K562 (cell line): ENCODE measurements at regions of chr7 and their contacts with region 1.

Region 1: DNA sequence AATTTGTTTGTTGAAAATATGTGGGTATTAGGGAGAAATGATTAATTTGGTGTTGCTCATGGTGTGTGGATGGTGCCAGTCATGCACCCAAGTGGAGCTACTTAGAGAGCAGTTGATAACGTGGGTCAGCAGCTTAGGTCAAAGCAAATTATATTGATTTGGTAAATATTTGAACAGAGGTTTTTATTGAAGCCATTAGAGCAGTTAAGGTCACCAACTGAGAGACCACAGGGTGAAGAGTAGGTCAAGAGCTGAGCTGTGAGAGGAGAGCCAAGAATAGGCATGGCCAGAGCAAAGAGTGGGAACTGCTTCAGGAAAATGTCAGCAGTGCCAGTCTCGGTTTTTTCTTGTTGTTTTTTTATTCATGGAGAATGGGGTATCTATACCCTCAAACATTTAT is 97.9 kb downstream of the TMEM168 start:
- DNase-seq: no peak
- ATAC-seq: no peak
- H3K4me3 ChIP-seq: no peak overlapping the region
- H3K27ac ChIP-seq: no peak overlapping the region
- H3K4me1 ChIP-seq: no peaks in the 10 kb centered on the region
- H3K27me3 ChIP-seq: peaks cover 0 to 12% of the 10 kb centered on the region in 2 experiments; a peak in 2 of 5 replicates
- CTCF ChIP-seq: no peak
- EP300 ChIP-seq: no peak
- POLR2A ChIP-seq: no peak
- RAD21 ChIP-seq: no peak

Region 2: DNA sequence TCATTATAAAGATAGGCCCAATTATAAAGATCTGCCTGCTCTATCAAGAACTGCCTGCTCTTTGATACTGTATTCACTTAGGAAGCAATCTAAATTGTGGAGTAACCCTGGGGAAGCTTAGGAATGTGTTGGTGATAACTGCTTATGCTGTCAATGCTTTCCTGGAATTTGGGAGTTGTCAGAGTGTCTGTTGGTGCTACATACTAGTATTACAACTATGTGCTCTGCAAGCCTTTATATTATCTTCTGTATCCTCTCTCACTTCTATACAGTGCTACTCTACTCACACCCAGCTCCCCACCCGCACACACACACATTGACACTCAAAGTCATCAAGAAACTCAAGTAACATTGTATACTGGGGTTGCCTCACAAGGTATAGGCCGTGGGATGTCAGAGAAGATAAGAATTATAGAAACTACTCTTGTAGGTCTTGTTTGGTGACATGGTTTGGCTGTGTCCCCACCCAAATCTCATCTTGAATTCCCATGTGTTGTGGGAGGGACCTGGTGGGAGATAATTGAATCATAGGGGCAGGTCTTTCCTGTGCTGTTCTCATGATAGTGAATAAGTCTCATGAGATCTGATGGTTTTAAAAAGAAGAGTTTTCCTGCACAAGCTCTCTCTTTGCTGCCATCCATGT is 479.6 kb before region 1 on chr7:
- CTCF ChIA-PET with region 1: no interaction called
- POLR2A ChIA-PET with region 1: no interaction called
- in situ Hi-C with region 1: no loop called
- intact Hi-C with region 1: no loop called
- DNase-seq: no peak
- ATAC-seq: no peak; the same call in 2 of the 3 replicates
- H3K4me3 ChIP-seq: no peak overlapping the region
- H3K27ac ChIP-seq: no peak overlapping the region
- H3K4me1 ChIP-seq: 0 out of 5 replicates have a peak, but pooled peaks cover 0 to under 1% of the 10 kb centered on the region in 2 experiments
- H3K27me3 ChIP-seq: no peaks in the 10 kb centered on the region
- CTCF ChIP-seq: no peak
- EP300 ChIP-seq: no peak
- POLR2A ChIP-seq: no peak
- RAD21 ChIP-seq: no peak

Region 3: GRCh38 chr7:112869111-112869757 is 176.9 kb after region 1 on chr7:
- CTCF ChIA-PET with region 1: no interaction called
- POLR2A ChIA-PET with region 1: no interaction called
- in situ Hi-C with region 1: no loop called
- intact Hi-C with region 1: loop called (anchors 5 kb)
- DNase-seq: peak; percentile 79 to 84 (median 82)
- ATAC-seq: peak; percentile 97
- H3K4me3 ChIP-seq: no peak overlapping the region
- H3K27ac ChIP-seq: no peak overlapping the region
- H3K4me1 ChIP-seq: no peaks in the 10 kb centered on the region; a peak in 1 of 5 replicates
- H3K27me3 ChIP-seq: no peaks in the 10 kb centered on the region
- CTCF ChIP-seq: peak; percentile 99 to 100 (median 100)
- EP300 ChIP-seq: no peak
- POLR2A ChIP-seq: no peak
- RAD21 ChIP-seq: peak; percentile 74 to 95